Esophagus muscularis mucosa (tissue), 4 donors: ENCODE measurements at regions of chr12 and their contacts with region 1.

Region 1: GRCh38 chr12:642633-643474 is 20.4 kb downstream of the NINJ2 start:
- DNase-seq: no peak
- H3K4me3 ChIP-seq: peak overlapping the region; percentile 71 to 79 (median 75)
- H3K27ac ChIP-seq: peak overlapping the region; percentile 96 to 98 (median 97)
- H3K4me1 ChIP-seq: peaks cover 44 to 55% (median 51%) of the 10 kb centered on the region in 4 donors
- H3K27me3 ChIP-seq: no peaks in the 10 kb centered on the region
- CTCF ChIP-seq: peak in 2 of 3 experiments; percentile 35 to 42
- EP300 ChIP-seq: no peak
- POLR2A ChIP-seq: no peak

Region 2: GRCh38 chr12:414859-415258 is 228.0 kb before region 1 on chr12:
- intact Hi-C with region 1: no loop called
- DNase-seq: no peak
- H3K4me3 ChIP-seq: no peak overlapping the region
- H3K27ac ChIP-seq: no peak overlapping the region
- H3K4me1 ChIP-seq: no peaks in the 10 kb centered on the region
- H3K27me3 ChIP-seq: no peaks in the 10 kb centered on the region
- CTCF ChIP-seq: no peak
- EP300 ChIP-seq: no peak
- POLR2A ChIP-seq: no peak

Region 3: DNA sequence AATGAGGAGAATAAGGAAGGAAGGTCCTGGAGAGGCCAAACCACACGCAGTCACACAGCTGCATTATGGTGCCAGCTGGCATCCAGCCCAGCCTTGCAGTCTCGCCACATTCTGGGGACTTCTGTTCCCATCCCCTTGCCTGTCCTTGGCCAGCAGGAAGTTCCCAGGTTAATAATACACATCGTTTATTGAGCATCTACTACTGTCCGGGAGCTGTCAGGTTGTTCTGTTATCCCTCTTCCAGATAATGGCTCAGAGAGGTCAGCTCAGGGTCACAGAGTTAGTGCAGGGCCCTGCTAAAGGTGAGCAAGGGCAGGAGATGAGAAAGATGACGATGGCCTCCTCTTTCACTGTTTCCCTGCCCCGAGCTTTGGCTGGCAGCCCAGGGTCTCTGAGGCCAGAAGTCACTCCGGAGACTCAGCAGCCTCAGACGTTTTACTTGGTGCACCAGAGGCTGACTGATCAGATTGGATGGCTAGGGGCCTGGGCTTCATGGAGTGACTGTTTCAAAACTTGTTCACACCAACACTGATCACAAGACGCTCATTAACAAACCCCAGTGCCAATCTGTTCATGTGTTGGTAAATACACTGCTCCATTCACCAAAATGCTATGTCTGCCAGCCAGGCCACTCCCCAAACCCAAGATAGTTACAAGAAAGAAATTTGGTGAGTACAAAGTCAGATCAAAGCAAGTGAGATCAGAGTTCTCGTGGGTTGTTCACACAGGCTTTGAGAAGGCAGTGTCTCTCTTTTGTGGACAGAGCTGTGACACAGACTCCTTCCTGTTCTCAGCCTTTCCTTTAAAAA is 103.9 kb before region 1 on chr12:
- intact Hi-C with region 1: no loop called
- DNase-seq: no peak
- H3K4me3 ChIP-seq: no peak overlapping the region
- H3K27ac ChIP-seq: no peak overlapping the region
- H3K4me1 ChIP-seq: peaks cover 0 to 10% (median 9%) of the 10 kb centered on the region in 4 donors
- H3K27me3 ChIP-seq: peaks cover 0 to 18% (median 0%) of the 10 kb centered on the region in 4 donors
- CTCF ChIP-seq: no peak
- EP300 ChIP-seq: no peak
- POLR2A ChIP-seq: no peak

Region 4: GRCh38 chr12:774051-774614 is 131.3 kb after region 1 on chr12:
- intact Hi-C with region 1: no loop called
- DNase-seq: no peak
- H3K4me3 ChIP-seq: no peak overlapping the region
- H3K27ac ChIP-seq: peak overlapping the region in 2 of 4 donors; percentile 7 to 9
- H3K4me1 ChIP-seq: peaks cover 52 to 91% (median 86%) of the 10 kb centered on the region in 4 donors
- H3K27me3 ChIP-seq: no peaks in the 10 kb centered on the region
- CTCF ChIP-seq: no peak
- EP300 ChIP-seq: no peak
- POLR2A ChIP-seq: no peak

Region 5: DNA sequence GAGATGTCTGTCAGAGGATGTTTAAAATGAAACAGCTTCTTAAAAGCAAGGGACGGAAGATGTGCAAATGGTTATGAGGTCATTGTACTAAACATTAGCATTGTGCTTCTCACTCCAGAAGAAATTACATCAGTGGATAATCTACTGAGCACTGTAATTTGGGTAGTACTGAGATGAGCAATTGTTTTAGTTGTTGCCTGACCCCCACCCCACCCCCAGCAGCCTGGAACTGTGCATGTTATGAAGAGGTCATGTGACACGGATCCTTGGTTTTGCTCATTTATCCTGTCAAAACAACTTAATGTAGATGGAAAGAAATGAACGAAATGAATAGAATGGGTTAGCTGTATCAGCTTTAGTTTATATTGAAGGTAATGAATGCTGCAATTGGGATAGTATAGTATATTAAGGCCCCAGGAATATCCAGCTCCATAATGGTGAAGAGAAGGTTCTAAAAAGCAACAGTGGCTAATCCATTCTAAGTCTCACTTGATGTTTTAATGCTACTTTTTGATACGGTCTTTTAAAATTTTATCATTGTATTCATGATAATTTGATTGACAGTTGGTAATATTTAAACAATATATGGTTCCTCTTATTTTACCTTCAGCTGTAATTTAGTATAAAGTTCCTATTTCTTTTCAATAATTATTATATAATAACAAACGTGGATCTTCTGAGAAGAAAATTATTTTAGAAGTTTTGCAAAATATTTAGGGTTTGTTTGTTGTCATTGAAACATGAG is 168.0 kb after region 1 on chr12:
- intact Hi-C with region 1: loop called (anchors 10 kb)
- DNase-seq: no peak
- H3K4me3 ChIP-seq: no peak overlapping the region
- H3K27ac ChIP-seq: no peak overlapping the region
- H3K4me1 ChIP-seq: peaks cover 26 to 47% (median 45%) of the 10 kb centered on the region in 4 donors
- H3K27me3 ChIP-seq: no peaks in the 10 kb centered on the region
- CTCF ChIP-seq: no peak
- EP300 ChIP-seq: no peak
- POLR2A ChIP-seq: no peak

Region 6: GRCh38 chr12:1594261-1595025 is 951.6 kb after region 1 on chr12 and contains the start of gene FBXL14:
- intact Hi-C with region 1: loop called (anchors 10 kb)
- DNase-seq: peak; percentile 95
- H3K4me3 ChIP-seq: peak within 1 kb of the TSS; percentile 84 to 96 (median 88)
- H3K27ac ChIP-seq: peak within 1 kb of the TSS; percentile 84 to 95 (median 94)
- H3K4me1 ChIP-seq: peaks cover 45 to 57% (median 56%) of the 10 kb centered on the region in 4 donors
- H3K27me3 ChIP-seq: no peaks in the 10 kb centered on the region
- CTCF ChIP-seq: peak in 1 of 3 experiments; percentile 23
- EP300 ChIP-seq: no peak
- POLR2A ChIP-seq: no peak
- total RNA-seq, gene FBXL14: 12.0 to 22.6 (median 16.0) TPM